ENCODE measurements at regions of chr3 and their contacts with region 1.

Region 1: DNA sequence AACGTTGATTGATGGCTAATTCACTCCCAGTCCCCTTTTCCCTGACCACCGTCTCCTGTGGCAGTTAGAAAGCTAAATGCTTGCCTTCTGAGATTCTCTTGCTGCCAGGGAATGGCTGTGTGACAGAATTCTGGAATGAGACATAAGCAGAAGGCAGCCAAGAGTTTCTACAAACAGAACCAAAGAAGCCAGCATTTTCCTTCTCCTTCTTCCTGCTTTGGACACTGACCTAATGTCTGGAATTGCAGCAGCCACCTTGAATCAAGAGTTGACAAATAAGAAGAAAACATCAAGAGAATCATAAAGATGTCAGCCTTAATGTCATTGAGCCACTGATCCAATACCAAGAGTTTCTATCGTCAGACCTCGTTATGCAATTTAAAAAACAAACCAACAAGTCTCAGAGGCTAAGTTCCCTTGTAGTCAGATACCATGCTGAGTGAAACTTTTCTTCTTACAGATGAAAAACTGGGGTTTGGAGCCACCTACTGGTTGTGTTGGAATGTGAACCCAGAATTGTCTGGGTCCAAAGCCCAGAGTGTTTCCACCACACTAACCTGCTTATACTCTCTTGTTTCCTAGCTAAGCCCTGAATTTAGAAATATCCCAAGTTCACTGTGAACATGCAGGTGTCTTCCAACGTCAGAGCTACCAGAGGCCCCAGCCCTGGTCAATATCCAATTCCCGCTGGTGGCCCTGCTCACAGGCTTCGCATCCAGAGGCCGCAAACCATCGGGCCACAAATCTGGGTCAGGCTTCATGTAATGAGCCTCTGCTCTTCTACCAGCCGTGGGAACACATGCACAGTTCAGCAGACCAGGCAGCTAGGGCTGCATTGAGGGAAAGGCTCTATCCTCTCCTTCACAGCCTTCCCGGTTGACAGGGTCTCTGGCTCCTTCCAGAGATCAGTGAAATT is 42.5 kb downstream of the MCF2L2 start:
- DNase-seq: peak in 33 of 35 experiments; percentile 14 to 80 (median 43)
- ATAC-seq: peak; percentile 69 to 78 (median 76)
- H3K4me3 ChIP-seq: no peak overlapping the region
- H3K4me3 Mint-ChIP-seq: no peak overlapping the region
- H3K27ac ChIP-seq: no peak overlapping the region
- H3K27ac Mint-ChIP-seq: no peak overlapping the region
- H3K4me1 ChIP-seq: no peaks in the 10 kb centered on the region
- H3K4me1 Mint-ChIP-seq: peaks cover 0 to 2% (median 2%) of the 10 kb centered on the region in 3 donors
- H3K27me3 ChIP-seq: no peaks in the 10 kb centered on the region
- H3K27me3 Mint-ChIP-seq: peaks cover 0 to 2% of the 10 kb centered on the region in 2 donors

Region 2: DNA sequence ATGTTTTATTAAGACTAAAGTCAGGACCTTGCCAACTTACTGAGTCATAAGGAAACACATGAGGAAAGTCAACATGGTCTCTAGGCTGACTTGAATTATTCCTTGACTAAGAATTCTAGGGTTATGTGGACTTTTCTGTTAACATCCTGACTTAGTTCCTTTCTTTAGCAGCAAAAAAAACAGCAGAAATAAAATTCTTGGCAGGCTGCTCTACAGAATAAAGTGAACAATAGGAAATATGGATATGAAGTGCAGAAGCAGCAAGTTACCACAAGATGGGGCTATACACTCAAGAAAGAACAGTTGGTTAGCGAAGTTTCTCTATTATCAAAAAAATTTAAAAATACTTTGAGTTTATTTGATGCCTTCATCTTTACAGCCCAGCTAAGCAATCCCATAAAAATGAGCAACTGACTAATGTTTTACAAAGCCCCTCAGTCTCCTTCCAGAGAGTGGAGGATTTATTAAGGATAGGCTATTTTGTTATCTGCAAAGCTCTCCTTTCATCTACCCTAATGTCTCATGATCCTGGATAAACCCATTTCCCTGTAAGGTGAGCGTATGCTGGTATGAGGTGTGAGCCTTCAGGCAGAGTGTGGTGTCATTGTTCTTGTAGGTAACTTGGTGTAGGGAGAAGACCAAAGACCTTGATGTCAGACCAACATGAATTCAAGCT is 263.6 kb before region 1 on chr3:
- CTCF ChIA-PET with region 1: interaction called, 17 to 38 read pairs
- POLR2A ChIA-PET with region 1: interaction called, 3 read pairs
- DNase-seq: peak in 3 of 35 experiments; percentile 6 to 71 (median 22)
- ATAC-seq: peak in 2 of 4 experiments; percentile 29 to 61
- H3K4me3 ChIP-seq: no peak overlapping the region
- H3K4me3 Mint-ChIP-seq: no peak overlapping the region
- H3K27ac ChIP-seq: no peak overlapping the region
- H3K27ac Mint-ChIP-seq: no peak overlapping the region
- H3K4me1 ChIP-seq: no peaks in the 10 kb centered on the region
- H3K4me1 Mint-ChIP-seq: no peaks in the 10 kb centered on the region
- H3K27me3 ChIP-seq: peaks cover 0 to 7% of the 10 kb centered on the region in 2 experiments
- H3K27me3 Mint-ChIP-seq: peaks cover 3 to 5% of the 10 kb centered on the region in 2 donors

Region 3: GRCh38 chr3:183178629-183179549 is 207.1 kb before region 1 on chr3:
- CTCF ChIA-PET with region 1: interaction called, 14 to 66 read pairs
- POLR2A ChIA-PET with region 1: no interaction called
- DNase-seq: peak in 18 of 35 experiments; percentile 7 to 42 (median 22)
- ATAC-seq: peak; percentile 53 to 79 (median 70)
- H3K4me3 ChIP-seq: peak overlapping the region; percentile 32 to 85
- H3K4me3 Mint-ChIP-seq: peak overlapping the region; percentile 67 to 77 (median 69)
- H3K27ac ChIP-seq: no peak overlapping the region
- H3K27ac Mint-ChIP-seq: no peak overlapping the region
- H3K4me1 ChIP-seq: peaks cover 4 to 12% of the 10 kb centered on the region in 2 experiments
- H3K4me1 Mint-ChIP-seq: peaks cover 5 to 15% (median 15%) of the 10 kb centered on the region in 3 donors
- H3K27me3 ChIP-seq: peaks cover 3 to 45% of the 10 kb centered on the region in 2 experiments
- H3K27me3 Mint-ChIP-seq: peaks cover 32 to 33% of the 10 kb centered on the region in 2 donors

Region 4: DNA sequence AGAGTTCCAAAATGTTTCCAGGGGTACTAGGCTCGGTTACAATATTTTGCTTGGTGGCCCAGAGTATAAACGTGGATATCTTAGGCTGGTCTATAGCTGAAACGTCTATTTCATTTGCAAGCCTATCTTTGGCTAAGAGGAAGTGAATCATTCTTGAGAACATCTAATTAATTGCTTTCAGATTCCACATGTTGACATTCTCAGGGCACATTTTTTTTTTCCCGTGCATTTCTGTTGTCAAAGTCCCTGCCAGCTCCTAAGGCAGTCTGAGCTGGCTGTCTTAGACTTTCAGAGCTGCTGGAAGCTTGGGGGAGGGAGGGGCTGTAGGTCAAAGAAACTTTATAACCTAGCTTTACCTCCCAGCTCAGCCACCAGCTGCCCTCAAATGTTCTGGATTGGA is 200.3 kb before region 1 on chr3:
- CTCF ChIA-PET with region 1: interaction called, 14 to 66 read pairs
- POLR2A ChIA-PET with region 1: interaction called in 1 of 2 experiments, 3 read pairs
- DNase-seq: no peak
- ATAC-seq: no peak
- H3K4me3 ChIP-seq: no peak overlapping the region
- H3K4me3 Mint-ChIP-seq: no peak overlapping the region
- H3K27ac ChIP-seq: no peak overlapping the region
- H3K27ac Mint-ChIP-seq: no peak overlapping the region
- H3K4me1 ChIP-seq: no peaks in the 10 kb centered on the region
- H3K4me1 Mint-ChIP-seq: no peaks in the 10 kb centered on the region
- H3K27me3 ChIP-seq: peaks cover 0 to 8% of the 10 kb centered on the region in 2 experiments
- H3K27me3 Mint-ChIP-seq: peaks cover 0 to 3% of the 10 kb centered on the region in 2 donors